IMR-90 (cell line): ENCODE measurements at regions of chr4 and their contacts with region 1.

Region 1: GRCh38 chr4:77095101-77095821 is 19.5 kb upstream of the CCNI start:
- DNase-seq: peak; percentile 31
- ATAC-seq: peak; percentile 96
- H3K4me3 ChIP-seq: no peak overlapping the region
- H3K27ac ChIP-seq: no peak overlapping the region
- H3K4me1 ChIP-seq: no peaks in the 10 kb centered on the region
- H3K27me3 ChIP-seq: no peaks in the 10 kb centered on the region
- CTCF ChIP-seq: peak; percentile 53
- POLR2A ChIP-seq: no peak
- RAD21 ChIP-seq: peak; percentile 34

Region 2: DNA sequence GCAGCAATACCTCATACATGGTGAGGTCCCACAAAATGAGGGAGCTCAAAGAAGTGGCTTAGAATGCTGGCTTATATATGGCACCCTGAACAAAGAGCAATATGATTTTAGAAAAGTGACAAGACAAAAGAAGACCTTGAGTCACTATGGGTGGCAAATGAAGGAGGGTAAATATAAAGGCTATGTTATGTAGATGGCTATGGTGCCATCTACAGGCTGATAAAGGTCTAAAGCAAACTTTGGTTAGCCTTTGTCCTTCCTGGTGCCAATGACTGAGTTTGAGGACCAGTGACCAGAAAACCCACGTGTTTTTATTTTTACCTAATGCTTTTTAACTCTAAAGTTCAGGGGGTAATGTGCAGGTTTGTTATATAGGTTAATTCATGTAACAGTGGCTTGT is 213.6 kb after region 1 on chr4:
- CTCF ChIA-PET with region 1: no interaction called
- POLR2A ChIA-PET with region 1: no interaction called
- dilution Hi-C with region 1: no loop called
- in situ Hi-C with region 1: no loop called
- intact Hi-C with region 1: loop called (anchors 5 kb)
- DNase-seq: peak; percentile 35
- ATAC-seq: peak; percentile 77
- H3K4me3 ChIP-seq: no peak overlapping the region
- H3K27ac ChIP-seq: no peak overlapping the region
- H3K4me1 ChIP-seq: no peaks in the 10 kb centered on the region
- H3K27me3 ChIP-seq: no peaks in the 10 kb centered on the region; the same call in 1 of the 2 replicates
- CTCF ChIP-seq: peak; percentile 54
- POLR2A ChIP-seq: no peak
- RAD21 ChIP-seq: peak; percentile 55